BJ (cell line): ENCODE measurements at regions of chr9 and their contacts with region 1.

Region 1: DNA sequence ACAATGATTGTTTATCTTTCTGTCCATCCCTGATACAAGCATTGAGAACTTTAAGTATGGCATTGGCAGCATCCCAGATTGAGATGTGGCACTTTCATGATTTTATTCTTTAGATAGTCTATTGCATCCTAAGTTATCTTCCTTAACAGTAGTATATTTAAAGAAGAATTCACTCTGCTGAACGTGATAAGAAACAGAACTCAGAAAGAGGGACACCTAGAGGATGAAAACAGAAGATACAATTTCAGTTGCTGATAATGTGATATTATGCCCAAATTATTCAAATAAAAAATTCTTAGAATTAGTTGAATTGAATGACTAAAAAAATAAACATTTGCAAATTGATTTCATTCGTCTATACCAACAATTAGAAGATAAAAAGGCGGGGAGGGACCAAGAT is 218.1 kb upstream of the DMRTA1 start:
- DNase-seq: no peak
- H3K4me3 ChIP-seq: no peak overlapping the region
- H3K27me3 ChIP-seq: no peaks in the 10 kb centered on the region
- CTCF ChIP-seq: peak; percentile 35

Region 2: GRCh38 chr9:22238809-22239684 is 10.5 kb after region 1 on chr9:
- CTCF ChIA-PET with region 1: interaction called, 14 read pairs
- POLR2A ChIA-PET with region 1: no interaction called
- DNase-seq: no peak
- H3K4me3 ChIP-seq: no peak overlapping the region
- H3K27me3 ChIP-seq: no peaks in the 10 kb centered on the region
- CTCF ChIP-seq: peak; percentile 63